MCF 10A (cell line): ENCODE measurements at regions of chr15 and their contacts with region 1.

Region 1: DNA sequence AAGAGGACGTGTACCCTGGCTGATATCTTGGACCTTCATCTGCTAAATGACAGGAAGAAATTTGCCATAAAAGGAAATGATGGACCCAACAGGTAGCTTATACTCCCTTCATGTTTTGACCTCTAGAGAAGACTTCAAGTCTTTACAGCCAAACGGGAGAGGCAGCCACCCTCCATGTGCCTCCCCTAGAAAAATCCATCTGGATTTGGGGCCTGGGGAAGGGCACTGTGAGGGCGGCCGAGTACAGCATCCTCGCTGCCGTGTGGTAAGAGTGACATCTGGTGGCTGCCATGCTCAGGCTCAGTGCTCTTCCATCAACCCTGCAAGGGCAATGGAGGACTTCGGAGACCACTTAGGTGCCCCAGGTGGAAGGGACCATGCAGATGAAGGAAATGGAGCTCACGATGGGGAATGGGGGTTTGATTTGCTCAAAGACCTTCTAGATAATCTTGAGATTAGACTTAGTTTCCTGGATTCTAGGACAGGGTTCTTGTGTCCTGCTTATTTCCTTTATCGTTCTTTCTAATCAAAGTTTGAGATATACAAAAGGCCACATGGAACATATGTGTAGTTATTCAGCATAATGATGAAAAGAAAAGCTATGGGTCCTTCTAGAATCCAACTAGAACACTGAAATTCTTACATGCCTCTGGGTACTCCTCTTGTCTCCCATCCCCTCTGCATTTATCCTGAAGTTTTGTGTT is 44.4 kb downstream of the AQP9 start:
- DNase-seq: peak; percentile 55
- H3K4me3 Mint-ChIP-seq: no peak overlapping the region
- H3K27ac Mint-ChIP-seq: no peak overlapping the region
- H3K4me1 Mint-ChIP-seq: peaks cover 12% of the 10 kb centered on the region
- H3K27me3 Mint-ChIP-seq: peaks cover 10% of the 10 kb centered on the region
- CTCF ChIP-seq: peak; percentile 88

Region 2: DNA sequence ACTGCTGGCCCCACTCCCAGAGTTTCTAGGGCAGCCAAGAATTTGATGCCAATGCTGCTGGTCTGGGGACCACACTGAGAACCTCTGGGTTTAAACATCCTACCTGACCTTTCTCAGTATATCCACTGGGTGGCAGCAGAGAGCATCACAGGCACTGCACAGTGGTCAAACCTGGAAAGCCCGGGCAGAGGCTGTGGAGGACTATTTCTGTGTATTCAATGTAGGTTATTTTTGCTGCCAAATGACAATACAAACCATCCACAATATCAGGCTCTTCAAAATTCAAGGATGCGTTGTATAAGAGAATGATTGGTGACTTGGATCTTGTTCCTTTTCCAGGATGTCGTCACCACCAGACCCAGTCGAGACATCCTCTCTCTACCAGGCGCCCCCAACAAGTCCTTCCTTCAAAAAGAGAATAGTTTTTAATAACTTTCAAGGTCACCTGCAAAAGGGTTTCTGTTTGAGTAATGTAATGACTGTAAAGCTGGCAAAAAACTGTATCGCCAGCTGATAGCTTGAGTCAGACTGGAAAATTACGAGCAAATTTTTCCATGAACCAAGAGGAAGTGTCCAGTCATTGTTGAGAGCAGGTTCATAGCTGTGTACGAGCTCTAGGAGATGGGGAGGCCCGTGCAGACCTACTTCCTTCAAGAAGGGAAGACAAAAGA is 621.4 kb before region 1 on chr15:
- CTCF ChIA-PET with region 1: interaction called, 3 read pairs
- POLR2A ChIA-PET with region 1: no interaction called
- intact Hi-C with region 1: loop called (anchors 1 kb)
- DNase-seq: peak; percentile 87
- H3K4me3 Mint-ChIP-seq: no peak overlapping the region
- H3K27ac Mint-ChIP-seq: no peak overlapping the region
- H3K4me1 Mint-ChIP-seq: peaks cover 18% of the 10 kb centered on the region
- H3K27me3 Mint-ChIP-seq: no peaks in the 10 kb centered on the region
- CTCF ChIP-seq: peak; percentile 86

Region 3: DNA sequence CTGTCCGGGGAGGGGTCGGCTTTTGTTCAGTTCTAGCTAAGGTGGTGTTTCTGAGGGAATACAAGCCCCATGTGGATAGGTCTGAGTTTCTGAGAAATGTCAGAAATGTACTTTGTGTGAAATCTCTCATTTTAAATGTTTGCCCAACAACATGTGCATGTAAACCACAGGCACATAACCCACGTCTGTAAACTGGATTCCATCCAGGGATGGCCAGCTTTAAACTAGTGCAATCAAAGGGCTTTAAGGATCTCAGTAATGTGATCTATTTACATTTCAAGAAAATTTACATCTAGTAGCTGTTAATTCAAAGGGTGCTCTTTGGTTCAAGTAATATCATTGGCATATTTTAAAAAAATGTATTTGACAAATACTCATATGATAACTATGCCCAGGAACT is 424.1 kb before region 1 on chr15:
- CTCF ChIA-PET with region 1: interaction called, 3 read pairs
- POLR2A ChIA-PET with region 1: no interaction called
- intact Hi-C with region 1: loop called (anchors 5 kb)
- DNase-seq: peak; percentile 14
- H3K4me3 Mint-ChIP-seq: no peak overlapping the region
- H3K27ac Mint-ChIP-seq: no peak overlapping the region
- H3K4me1 Mint-ChIP-seq: no peaks in the 10 kb centered on the region
- H3K27me3 Mint-ChIP-seq: no peaks in the 10 kb centered on the region
- CTCF ChIP-seq: no peak

Region 4: GRCh38 chr15:57969354-57969753 is 213.3 kb before region 1 on chr15:
- CTCF ChIA-PET with region 1: no interaction called
- POLR2A ChIA-PET with region 1: no interaction called
- intact Hi-C with region 1: loop called (anchors 1 kb)
- DNase-seq: peak; percentile 49
- H3K4me3 Mint-ChIP-seq: no peak overlapping the region
- H3K27ac Mint-ChIP-seq: no peak overlapping the region
- H3K4me1 Mint-ChIP-seq: no peaks in the 10 kb centered on the region
- H3K27me3 Mint-ChIP-seq: no peaks in the 10 kb centered on the region
- CTCF ChIP-seq: peak; percentile 19

Region 5: GRCh38 chr15:58086491-58086890 is 96.1 kb before region 1 on chr15:
- CTCF ChIA-PET with region 1: interaction called, 17 read pairs
- POLR2A ChIA-PET with region 1: no interaction called
- intact Hi-C with region 1: no loop called
- DNase-seq: no peak
- H3K4me3 Mint-ChIP-seq: no peak overlapping the region
- H3K27ac Mint-ChIP-seq: no peak overlapping the region
- H3K4me1 Mint-ChIP-seq: peaks cover 5% of the 10 kb centered on the region
- H3K27me3 Mint-ChIP-seq: peaks cover 11% of the 10 kb centered on the region
- CTCF ChIP-seq: no peak

Region 6: GRCh38 chr15:58171476-58172057 is 11.0 kb before region 1 on chr15:
- CTCF ChIA-PET with region 1: interaction called, 23 read pairs
- POLR2A ChIA-PET with region 1: interaction called, 5 read pairs
- intact Hi-C with region 1: no loop called
- DNase-seq: no peak
- H3K4me3 Mint-ChIP-seq: no peak overlapping the region
- H3K27ac Mint-ChIP-seq: no peak overlapping the region
- H3K4me1 Mint-ChIP-seq: no peaks in the 10 kb centered on the region
- H3K27me3 Mint-ChIP-seq: peaks cover 35% of the 10 kb centered on the region
- CTCF ChIP-seq: no peak

Region 7: GRCh38 chr15:58274885-58275284 is 92.3 kb after region 1 on chr15:
- CTCF ChIA-PET with region 1: no interaction called
- POLR2A ChIA-PET with region 1: no interaction called
- intact Hi-C with region 1: no loop called
- DNase-seq: no peak
- H3K4me3 Mint-ChIP-seq: no peak overlapping the region
- H3K27ac Mint-ChIP-seq: no peak overlapping the region
- H3K4me1 Mint-ChIP-seq: peaks cover under 1% of the 10 kb centered on the region
- H3K27me3 Mint-ChIP-seq: peaks cover 11% of the 10 kb centered on the region
- CTCF ChIP-seq: no peak

Region 8: GRCh38 chr15:58298879-58299850 is 116.6 kb after region 1 on chr15:
- CTCF ChIA-PET with region 1: no interaction called
- POLR2A ChIA-PET with region 1: no interaction called
- intact Hi-C with region 1: no loop called
- DNase-seq: no peak
- H3K4me3 Mint-ChIP-seq: no peak overlapping the region
- H3K27ac Mint-ChIP-seq: no peak overlapping the region
- H3K4me1 Mint-ChIP-seq: no peaks in the 10 kb centered on the region
- H3K27me3 Mint-ChIP-seq: no peaks in the 10 kb centered on the region
- CTCF ChIP-seq: no peak

Region 9: DNA sequence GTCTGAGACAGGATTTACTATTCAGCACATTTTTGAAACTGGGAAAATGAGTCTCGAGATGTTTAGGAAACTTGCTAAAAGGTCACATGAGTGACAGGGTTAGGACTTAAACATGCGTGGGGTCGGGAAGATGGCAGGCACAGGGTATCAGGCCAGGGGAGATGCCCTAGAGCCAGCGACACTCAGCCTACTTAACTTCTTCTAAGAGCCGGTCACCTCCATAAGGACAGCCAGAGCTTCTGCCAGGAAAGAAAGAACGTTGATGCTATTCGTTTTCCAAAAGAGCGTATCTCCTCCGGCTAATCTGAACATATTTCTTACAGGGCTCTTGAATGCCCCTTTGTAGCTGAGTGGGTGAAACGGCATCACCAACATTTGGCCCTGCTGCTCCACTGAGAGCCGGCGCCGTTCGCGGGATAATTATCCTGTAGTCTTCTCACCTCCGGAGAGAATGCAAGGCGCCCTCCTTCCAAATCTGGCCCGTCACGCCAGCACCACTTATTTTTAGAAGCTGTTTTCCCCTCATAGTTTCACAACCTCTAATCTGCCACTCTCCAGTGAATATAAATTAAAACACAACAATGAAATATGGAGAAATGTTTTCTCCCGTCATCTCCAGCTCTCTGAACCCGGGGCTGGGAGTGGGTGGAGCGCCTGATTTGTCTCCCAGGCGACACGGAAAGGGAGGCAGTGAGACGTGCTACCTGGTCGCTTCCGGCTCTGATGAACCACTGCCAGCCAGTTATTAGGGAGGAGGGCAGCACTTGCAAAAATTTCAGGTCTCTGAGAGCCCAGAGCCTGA is 307.7 kb after region 1 on chr15:
- CTCF ChIA-PET with region 1: no interaction called
- POLR2A ChIA-PET with region 1: no interaction called
- intact Hi-C with region 1: no loop called
- DNase-seq: no peak
- H3K4me3 Mint-ChIP-seq: no peak overlapping the region
- H3K27ac Mint-ChIP-seq: no peak overlapping the region
- H3K4me1 Mint-ChIP-seq: peaks cover 21% of the 10 kb centered on the region
- H3K27me3 Mint-ChIP-seq: no peaks in the 10 kb centered on the region
- CTCF ChIP-seq: no peak